Activated T-helper 2 cell treated with anti-CD3 and anti-CD28 coated beads, Interferon-gamma antibody, Interleukin-2, Interleukin-4, amounts not matched to agents 10 μg/mL and 5 μg/mL and 100 μg/mL, durations not matched to agents 14 hours and 24 hours and 36 hours (primary cell): ENCODE measurements at regions of chr1 and their contacts with region 1.

Region 1: DNA sequence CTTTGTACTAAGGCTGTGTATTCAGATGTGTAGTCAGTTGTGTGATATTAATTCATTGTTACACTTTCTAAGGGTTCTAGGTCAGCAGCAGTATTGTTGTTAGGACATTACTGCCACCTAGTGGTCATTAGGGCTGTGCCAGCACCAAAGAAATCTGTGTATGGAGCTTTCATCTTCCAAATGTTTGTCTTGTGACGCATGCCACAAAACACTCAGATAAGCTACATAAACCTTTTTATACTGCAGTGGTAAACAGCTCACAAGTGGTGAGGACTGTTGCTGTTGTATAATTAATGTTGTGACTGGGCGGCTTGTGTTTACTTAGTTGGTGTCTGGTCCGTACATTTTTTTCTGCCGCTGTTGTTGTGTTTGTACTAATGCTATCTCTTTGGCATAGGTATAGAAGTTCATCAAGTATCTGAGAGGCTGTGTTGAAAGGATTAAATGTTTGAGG is 51.7 kb downstream of the S1PR1 start:
- DNase-seq: peak; percentile 62
- H3K4me3 Mint-ChIP-seq: no peak overlapping the region
- H3K27ac Mint-ChIP-seq: no peak overlapping the region
- H3K4me1 Mint-ChIP-seq: peaks cover 70% of the 10 kb centered on the region
- H3K27me3 Mint-ChIP-seq: no peaks in the 10 kb centered on the region

Region 2: GRCh38 chr1:100443811-100444571 is 844.5 kb before region 1 on chr1:
- intact Hi-C with region 1: loop called (anchors 10 kb)
- DNase-seq: peak; percentile 21
- H3K4me3 Mint-ChIP-seq: peak overlapping the region; percentile 68
- H3K27ac Mint-ChIP-seq: peak overlapping the region; percentile 92
- H3K4me1 Mint-ChIP-seq: peaks cover 75% of the 10 kb centered on the region
- H3K27me3 Mint-ChIP-seq: no peaks in the 10 kb centered on the region

Region 3: GRCh38 chr1:100921109-100921706 is 367.3 kb before region 1 on chr1:
- intact Hi-C with region 1: loop called (anchors 1 kb)
- DNase-seq: no peak
- H3K4me3 Mint-ChIP-seq: no peak overlapping the region
- H3K27ac Mint-ChIP-seq: no peak overlapping the region
- H3K4me1 Mint-ChIP-seq: peaks cover 32% of the 10 kb centered on the region
- H3K27me3 Mint-ChIP-seq: no peaks in the 10 kb centered on the region

Region 4: DNA sequence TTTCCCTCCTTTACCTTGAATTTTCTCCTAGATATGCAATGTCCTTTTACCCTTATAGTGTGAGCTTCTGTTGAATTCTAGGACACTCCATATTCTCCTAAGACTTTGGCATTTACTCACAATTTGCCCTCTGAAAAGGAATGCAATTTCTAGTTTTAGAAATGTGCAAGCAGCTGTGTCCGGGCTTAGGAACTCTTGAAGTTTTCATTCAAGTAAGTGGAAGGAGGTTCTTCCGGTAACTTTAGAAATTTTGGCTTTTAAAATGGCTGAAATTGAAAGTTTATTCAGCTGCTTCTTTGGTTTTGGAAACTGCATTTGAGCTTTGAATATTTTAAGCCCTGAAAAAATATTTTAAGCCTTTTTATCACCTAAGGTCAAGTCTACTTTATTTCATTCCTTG is 319.2 kb before region 1 on chr1:
- intact Hi-C with region 1: no loop called
- DNase-seq: no peak
- H3K4me3 Mint-ChIP-seq: no peak overlapping the region
- H3K27ac Mint-ChIP-seq: no peak overlapping the region
- H3K4me1 Mint-ChIP-seq: peaks cover 24% of the 10 kb centered on the region
- H3K27me3 Mint-ChIP-seq: no peaks in the 10 kb centered on the region

Region 5: DNA sequence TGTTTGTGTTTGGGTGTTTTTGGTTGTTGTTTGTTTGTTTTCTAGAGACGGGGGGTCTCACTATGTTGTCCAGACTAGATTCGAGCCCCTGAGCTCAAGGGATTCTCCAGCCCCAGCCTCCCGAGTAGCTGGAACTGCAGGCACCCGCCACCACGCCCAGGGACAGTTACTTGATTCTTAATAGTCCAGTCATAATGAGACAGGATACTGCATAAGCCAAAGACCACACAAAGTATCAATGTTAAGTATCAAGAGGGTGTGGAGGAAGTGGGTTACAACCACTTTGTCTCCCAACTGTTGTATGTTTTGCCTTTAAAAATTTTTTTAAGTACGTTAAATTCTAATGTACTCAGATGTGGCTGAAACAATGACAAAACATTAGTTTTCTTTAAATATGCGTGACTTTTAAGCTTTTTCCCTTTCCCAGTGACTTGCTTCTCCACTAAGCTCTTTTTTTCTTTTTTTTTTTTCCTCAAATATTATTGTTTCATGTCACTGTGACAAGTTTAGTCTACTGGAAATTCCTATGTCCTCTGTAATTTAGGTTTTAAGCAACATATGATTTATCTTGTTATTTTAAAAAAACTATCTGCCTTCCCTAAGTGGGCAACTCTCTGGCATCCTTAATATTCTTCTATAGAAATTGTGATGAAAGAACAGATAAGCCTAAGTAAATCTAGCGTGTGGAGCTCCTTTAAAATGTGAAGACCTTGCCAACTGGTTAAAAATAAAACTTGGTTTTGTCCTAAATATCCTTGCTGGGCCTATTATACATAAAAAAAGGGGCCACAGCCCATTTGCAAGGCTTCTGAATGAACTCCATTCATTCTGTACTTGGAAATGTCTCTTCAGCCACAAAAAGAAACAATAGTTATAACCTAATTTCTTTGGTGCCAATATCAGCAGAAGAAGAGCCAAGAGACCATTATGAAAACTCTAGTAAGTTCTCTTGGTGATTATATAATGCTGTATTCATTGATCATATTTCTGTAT is 206.7 kb before region 1 on chr1:
- intact Hi-C with region 1: loop called (anchors 2 kb)
- DNase-seq: peak; percentile 64
- H3K4me3 Mint-ChIP-seq: peak overlapping the region; percentile 0
- H3K27ac Mint-ChIP-seq: peak overlapping the region; percentile 67
- H3K4me1 Mint-ChIP-seq: peaks cover 51% of the 10 kb centered on the region
- H3K27me3 Mint-ChIP-seq: no peaks in the 10 kb centered on the region

Region 6: GRCh38 chr1:101178688-101179491 is 109.6 kb before region 1 on chr1:
- intact Hi-C with region 1: loop called (anchors 1 kb)
- DNase-seq: peak; percentile 29
- H3K4me3 Mint-ChIP-seq: peak overlapping the region; percentile 81
- H3K27ac Mint-ChIP-seq: peak overlapping the region; percentile 100
- H3K4me1 Mint-ChIP-seq: peaks cover 71% of the 10 kb centered on the region
- H3K27me3 Mint-ChIP-seq: no peaks in the 10 kb centered on the region

Region 7: GRCh38 chr1:101253976-101254674 is 34.4 kb before region 1 on chr1:
- intact Hi-C with region 1: loop called (anchors 1 kb)
- DNase-seq: no peak
- H3K4me3 Mint-ChIP-seq: no peak overlapping the region
- H3K27ac Mint-ChIP-seq: peak overlapping the region; percentile 62
- H3K4me1 Mint-ChIP-seq: peaks cover 29% of the 10 kb centered on the region
- H3K27me3 Mint-ChIP-seq: no peaks in the 10 kb centered on the region

Region 8: DNA sequence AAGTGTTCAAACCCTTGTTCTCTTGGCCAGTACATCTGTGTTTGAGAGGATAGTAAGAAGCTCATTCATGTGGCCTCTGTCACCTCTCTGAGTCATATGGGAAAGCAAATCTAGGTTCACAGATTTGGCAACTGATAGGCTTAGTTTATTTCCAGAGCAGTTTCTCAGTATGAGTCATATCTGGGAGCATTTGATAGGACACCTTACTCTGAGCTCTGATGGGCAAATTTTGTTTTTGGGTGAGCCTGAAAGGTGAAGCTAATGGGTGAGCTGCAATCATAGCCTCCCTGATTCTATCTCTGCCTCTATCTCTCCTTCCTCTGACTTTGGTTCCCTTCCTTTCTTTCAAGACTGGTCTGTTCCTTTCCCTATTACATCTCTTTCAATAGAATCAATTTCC is 82.7 kb after region 1 on chr1:
- intact Hi-C with region 1: loop called (anchors 5 kb)
- DNase-seq: peak; percentile 31
- H3K4me3 Mint-ChIP-seq: peak overlapping the region; percentile 10
- H3K27ac Mint-ChIP-seq: no peak overlapping the region
- H3K4me1 Mint-ChIP-seq: peaks cover 17% of the 10 kb centered on the region
- H3K27me3 Mint-ChIP-seq: peaks cover 44% of the 10 kb centered on the region